B cell (primary cell): ENCODE measurements at regions of chrX and their contacts with region 1.

Region 1: GRCh38 chrX:153649178-153649914 is 2.3 kb downstream of the DUSP9 start:
- DNase-seq: peak; percentile 50
- ATAC-seq: peak; percentile 73
- H3K4me3 ChIP-seq: no peak overlapping the region
- H3K4me3 Mint-ChIP-seq: no peak overlapping the region
- H3K27ac ChIP-seq: no peak overlapping the region
- H3K27ac Mint-ChIP-seq: no peak overlapping the region
- H3K4me1 ChIP-seq: peaks cover 4 to 10% of the 10 kb centered on the region in 2 donors
- H3K4me1 Mint-ChIP-seq: peaks cover 3% of the 10 kb centered on the region
- H3K27me3 ChIP-seq: peaks cover 0 to 41% (median 7%) of the 10 kb centered on the region in 4 experiments
- H3K27me3 Mint-ChIP-seq: peaks cover 7% of the 10 kb centered on the region
- CTCF ChIP-seq: peak; percentile 45

Region 2: DNA sequence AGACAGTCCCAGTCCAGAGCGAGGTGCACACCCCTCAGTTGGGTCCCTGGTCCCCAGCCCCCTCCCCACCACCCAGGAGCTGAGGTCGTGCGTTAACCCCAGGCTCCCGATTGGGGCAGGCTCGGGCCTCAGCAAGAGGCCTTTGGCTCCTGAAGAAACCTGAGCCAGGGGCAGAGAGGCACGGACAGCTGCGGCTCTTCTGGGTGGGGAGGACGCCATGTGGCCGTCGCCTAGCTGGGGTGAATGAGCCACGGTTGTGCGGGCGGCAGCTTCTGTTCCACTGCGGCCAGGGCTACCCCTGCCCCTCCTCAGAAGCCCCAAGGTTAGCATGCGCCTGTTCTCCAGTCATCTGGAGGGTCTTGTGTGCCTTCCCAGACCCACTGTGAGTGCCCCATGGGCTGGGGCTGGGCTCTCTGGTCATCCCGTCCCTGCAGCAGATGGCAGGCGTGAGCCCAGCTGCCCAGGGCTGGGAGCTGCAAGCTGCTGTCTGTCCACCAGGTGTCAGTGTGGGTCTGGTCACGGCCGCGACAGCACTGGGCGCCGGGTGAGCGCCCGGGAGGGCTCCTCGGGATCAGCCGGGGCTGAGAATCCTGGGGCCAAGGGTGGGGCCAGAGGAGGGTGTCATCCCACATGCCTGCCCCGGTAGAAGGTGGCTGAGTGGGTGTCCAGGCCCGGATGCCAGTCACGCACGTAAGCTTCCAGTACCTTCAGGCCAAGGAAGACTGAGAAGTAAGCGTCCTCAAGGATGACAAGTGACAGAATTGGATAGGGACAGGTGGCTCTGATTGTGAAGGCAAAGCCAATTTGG is 110.0 kb before region 1 on chrX:
- CTCF ChIA-PET with region 1: interaction called, 25 read pairs
- POLR2A ChIA-PET with region 1: no interaction called
- intact Hi-C with region 1: loop called (anchors 1 kb)
- DNase-seq: peak; percentile 68
- ATAC-seq: peak; percentile 93
- H3K4me3 ChIP-seq: no peak overlapping the region
- H3K4me3 Mint-ChIP-seq: no peak overlapping the region
- H3K27ac ChIP-seq: no peak overlapping the region
- H3K27ac Mint-ChIP-seq: no peak overlapping the region
- H3K4me1 ChIP-seq: peaks cover 0 to 3% of the 10 kb centered on the region in 2 donors
- H3K4me1 Mint-ChIP-seq: no peaks in the 10 kb centered on the region
- H3K27me3 ChIP-seq: no peaks in the 10 kb centered on the region
- H3K27me3 Mint-ChIP-seq: peaks cover 3% of the 10 kb centered on the region
- CTCF ChIP-seq: peak; percentile 76

Region 3: DNA sequence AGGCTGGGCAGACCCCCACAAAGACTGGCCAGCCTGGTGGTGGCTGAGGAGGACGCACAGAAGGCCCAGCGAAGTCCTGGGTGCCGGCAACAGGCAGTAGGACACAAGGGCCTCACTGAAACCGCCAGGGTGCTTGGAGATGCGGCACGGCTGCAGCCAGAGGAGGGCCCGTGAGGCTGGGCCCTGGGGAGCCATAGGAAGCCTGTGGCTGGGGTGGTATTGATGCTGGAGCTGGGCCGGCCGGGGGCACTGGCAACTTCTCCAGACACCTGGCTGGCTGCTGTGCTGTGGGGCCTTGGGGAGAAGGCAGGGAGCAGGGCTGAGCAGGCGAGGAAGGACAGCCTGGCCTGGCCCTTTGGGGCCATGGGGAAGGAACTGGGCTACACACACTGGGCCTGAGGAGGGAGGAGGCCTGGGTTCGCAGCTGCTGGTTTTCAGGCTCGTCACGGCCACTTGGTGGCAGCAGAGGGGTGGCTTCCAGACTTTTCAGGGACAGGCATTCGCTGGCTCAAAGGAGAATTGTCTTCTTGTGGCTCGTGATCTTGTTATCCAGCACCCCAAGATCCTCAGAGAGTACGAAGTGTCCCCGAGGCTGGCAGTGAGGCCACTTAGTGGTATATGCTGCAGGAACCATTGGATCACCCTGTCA is 94.7 kb before region 1 on chrX:
- CTCF ChIA-PET with region 1: interaction called, 25 read pairs
- POLR2A ChIA-PET with region 1: no interaction called
- intact Hi-C with region 1: loop called (anchors 1 kb)
- DNase-seq: peak; percentile 72
- ATAC-seq: peak; percentile 73
- H3K4me3 ChIP-seq: no peak overlapping the region
- H3K4me3 Mint-ChIP-seq: no peak overlapping the region
- H3K27ac ChIP-seq: no peak overlapping the region
- H3K27ac Mint-ChIP-seq: no peak overlapping the region
- H3K4me1 ChIP-seq: no peaks in the 10 kb centered on the region
- H3K4me1 Mint-ChIP-seq: no peaks in the 10 kb centered on the region
- H3K27me3 ChIP-seq: no peaks in the 10 kb centered on the region
- H3K27me3 Mint-ChIP-seq: no peaks in the 10 kb centered on the region
- CTCF ChIP-seq: peak; percentile 66

Region 4: GRCh38 chrX:153609917-153610428 is 39.4 kb before region 1 on chrX:
- CTCF ChIA-PET with region 1: interaction called, 6 read pairs
- POLR2A ChIA-PET with region 1: no interaction called
- intact Hi-C with region 1: loop called (anchors 5 kb)
- DNase-seq: peak; percentile 81
- ATAC-seq: peak; percentile 94
- H3K4me3 ChIP-seq: peak overlapping the region in 4 of 5 experiments; percentile 45 to 59 (median 56)
- H3K4me3 Mint-ChIP-seq: peak overlapping the region; percentile 85
- H3K27ac ChIP-seq: no peak overlapping the region
- H3K27ac Mint-ChIP-seq: no peak overlapping the region
- H3K4me1 ChIP-seq: peaks cover 0 to 15% of the 10 kb centered on the region in 2 donors
- H3K4me1 Mint-ChIP-seq: peaks cover 10% of the 10 kb centered on the region
- H3K27me3 ChIP-seq: peaks cover 0 to 5% (median 0%) of the 10 kb centered on the region in 4 experiments
- H3K27me3 Mint-ChIP-seq: peaks cover 12% of the 10 kb centered on the region
- CTCF ChIP-seq: peak; percentile 73